ENCODE measurements at regions of chr10 and their contacts with region 1.

Region 1: DNA sequence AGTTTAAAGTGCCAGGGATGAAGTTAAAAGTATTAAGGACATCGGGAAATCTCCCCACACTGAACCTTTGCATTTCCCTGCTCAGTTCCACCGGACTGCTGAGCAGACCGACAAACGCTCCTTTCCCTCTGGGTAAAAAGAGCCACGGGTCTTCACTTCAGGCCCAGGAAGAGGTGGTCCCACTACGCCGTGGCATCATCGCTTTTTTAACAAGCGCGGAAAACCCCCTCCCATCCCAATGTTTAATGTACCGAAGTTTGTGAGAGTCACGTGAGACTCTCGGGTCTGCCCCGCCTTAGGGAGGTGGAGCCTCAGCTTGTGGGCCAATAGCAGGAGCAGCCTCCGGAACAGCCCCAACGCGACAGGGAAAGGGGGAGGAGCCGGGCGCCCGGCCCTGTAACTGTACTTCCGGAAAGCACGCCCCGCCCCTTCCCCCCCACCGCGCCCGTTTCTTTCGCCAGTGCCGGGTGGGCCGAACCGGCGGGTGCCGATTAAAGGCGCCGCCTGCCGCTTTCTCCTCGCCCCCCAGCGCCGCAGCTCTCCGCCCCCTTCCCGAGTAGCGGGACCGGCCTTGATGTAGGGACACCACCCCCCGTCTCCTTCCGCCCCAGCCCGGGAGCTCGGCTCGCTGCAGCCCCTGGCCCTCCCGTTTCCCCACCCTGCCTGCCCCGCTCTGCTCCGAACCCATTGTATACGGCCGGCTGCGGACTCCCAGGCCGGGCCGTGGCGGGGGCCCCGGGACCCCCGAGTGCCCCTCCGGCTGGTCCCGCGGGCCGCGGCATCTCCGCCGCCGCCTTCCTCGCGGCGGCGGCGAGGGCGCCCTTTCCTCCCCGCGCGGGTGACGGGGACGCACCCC is 2.2 kb upstream of the TRIM8 start:
- DNase-seq: peak; percentile 95 to 99 (median 98)
- H3K4me3 ChIP-seq: peak overlapping the region; percentile 63 to 99 (median 88)
- H3K27ac ChIP-seq: peak overlapping the region; percentile 94 to 100 (median 99)
- H3K27me3 ChIP-seq: no peaks in the 10 kb centered on the region
- CTCF ChIP-seq: peak in 22 of 56 donors; percentile 1 to 48 (median 24)

Region 2: DNA sequence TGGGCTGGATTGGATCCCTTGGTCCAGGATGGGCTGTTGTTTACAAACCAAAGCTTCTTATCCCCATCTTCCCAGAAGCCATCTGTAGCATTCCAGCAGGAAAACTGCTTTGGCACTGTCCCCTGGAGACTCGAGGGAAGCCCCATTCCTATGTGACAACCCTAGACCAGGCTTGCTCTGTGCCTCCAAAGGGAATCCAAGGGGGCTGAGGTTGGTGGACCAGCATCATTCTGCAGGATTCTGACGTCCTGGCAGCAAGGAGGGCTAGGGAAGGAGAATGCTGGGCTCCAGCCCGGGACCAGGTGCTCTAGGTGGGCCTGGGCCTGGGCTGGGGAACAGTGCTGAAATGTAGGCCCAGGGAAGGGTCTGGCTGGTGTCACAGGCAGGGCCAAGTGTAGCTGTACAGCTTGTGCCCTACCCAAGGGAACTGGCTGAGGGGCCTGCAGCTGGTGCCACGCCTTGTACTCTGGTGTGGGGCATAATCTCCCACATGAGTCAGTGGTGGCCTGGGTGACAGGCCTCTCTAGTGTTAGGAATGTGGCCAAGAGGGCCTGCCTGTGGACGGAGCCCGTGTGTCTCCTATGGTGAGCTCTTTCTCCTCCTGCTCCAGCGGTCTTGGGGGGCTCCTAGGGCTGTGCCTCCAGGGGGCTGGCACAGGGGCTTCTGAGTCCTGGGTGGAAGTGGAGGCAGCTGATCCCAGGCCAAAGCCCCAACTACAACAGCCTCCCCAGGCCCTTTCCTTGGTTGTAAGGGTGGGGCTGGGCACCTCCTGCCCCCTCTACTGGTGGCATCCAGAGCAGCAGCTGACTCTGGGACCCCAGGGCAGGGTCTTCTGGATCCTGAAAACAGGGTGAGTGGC is 27.3 kb after region 1 on chr10:
- intact Hi-C with region 1: loop called in 1 of 2 experiments (anchors 1 kb)
- DNase-seq: peak in 6 of 10 donors; percentile 35 to 84 (median 72)
- H3K4me3 ChIP-seq: no peak overlapping the region
- H3K27ac ChIP-seq: peak overlapping the region in 58 of 59 donors; percentile 63 to 96 (median 86)
- H3K27me3 ChIP-seq: no peaks in the 10 kb centered on the region
- CTCF ChIP-seq: peak in 41 of 56 donors; percentile 14 to 64 (median 44)

Measured in dorsolateral prefrontal cortex (tissue), 120 donors.